ENCODE measurements at regions of chr15 and their contacts with region 1.

Region 1: GRCh38 chr15:30073915-30074314 is 8.8 kb upstream of the GOLGA8J start:
- DNase-seq: no peak
- H3K4me3 Mint-ChIP-seq: no peak overlapping the region
- H3K27ac Mint-ChIP-seq: no peak overlapping the region
- H3K4me1 Mint-ChIP-seq: peaks cover 6% of the 10 kb centered on the region
- H3K27me3 Mint-ChIP-seq: peaks cover 19% of the 10 kb centered on the region
- CTCF ChIP-seq: no peak

Region 2: DNA sequence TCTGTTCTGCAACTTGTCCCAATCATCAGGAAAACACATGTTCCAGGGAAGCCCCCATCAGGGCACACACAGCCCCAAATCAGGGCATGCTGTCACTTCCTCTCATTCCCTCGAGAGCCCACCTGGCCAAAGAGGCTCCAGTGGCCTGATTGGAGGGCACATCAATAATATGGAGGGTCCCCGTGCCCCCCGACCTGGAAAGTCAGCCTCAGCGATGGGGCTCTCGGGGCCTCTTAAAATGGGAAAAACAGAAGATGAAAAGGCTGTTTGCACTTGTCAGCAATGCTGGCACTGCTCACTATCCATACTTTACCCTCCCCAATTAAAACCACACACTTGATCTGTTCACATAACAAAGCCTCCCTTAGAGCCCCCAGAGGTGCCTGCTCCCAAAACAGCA is 631.4 kb before region 1 on chr15:
- CTCF ChIA-PET with region 1: no interaction called
- POLR2A ChIA-PET with region 1: no interaction called
- intact Hi-C with region 1: no loop called
- DNase-seq: no peak
- H3K4me3 Mint-ChIP-seq: no peak overlapping the region
- H3K27ac Mint-ChIP-seq: no peak overlapping the region
- H3K4me1 Mint-ChIP-seq: no peaks in the 10 kb centered on the region
- H3K27me3 Mint-ChIP-seq: peaks cover 11% of the 10 kb centered on the region
- CTCF ChIP-seq: no peak

Region 3: GRCh38 chr15:29736744-29737020 is 337.2 kb before region 1 on chr15:
- CTCF ChIA-PET with region 1: interaction called, 14 read pairs
- POLR2A ChIA-PET with region 1: no interaction called
- intact Hi-C with region 1: loop called (anchors 10 kb)
- DNase-seq: peak; percentile 90
- H3K4me3 Mint-ChIP-seq: no peak overlapping the region
- H3K27ac Mint-ChIP-seq: peak overlapping the region; percentile 60
- H3K4me1 Mint-ChIP-seq: peaks cover 22% of the 10 kb centered on the region
- H3K27me3 Mint-ChIP-seq: no peaks in the 10 kb centered on the region
- CTCF ChIP-seq: no peak

Region 4: DNA sequence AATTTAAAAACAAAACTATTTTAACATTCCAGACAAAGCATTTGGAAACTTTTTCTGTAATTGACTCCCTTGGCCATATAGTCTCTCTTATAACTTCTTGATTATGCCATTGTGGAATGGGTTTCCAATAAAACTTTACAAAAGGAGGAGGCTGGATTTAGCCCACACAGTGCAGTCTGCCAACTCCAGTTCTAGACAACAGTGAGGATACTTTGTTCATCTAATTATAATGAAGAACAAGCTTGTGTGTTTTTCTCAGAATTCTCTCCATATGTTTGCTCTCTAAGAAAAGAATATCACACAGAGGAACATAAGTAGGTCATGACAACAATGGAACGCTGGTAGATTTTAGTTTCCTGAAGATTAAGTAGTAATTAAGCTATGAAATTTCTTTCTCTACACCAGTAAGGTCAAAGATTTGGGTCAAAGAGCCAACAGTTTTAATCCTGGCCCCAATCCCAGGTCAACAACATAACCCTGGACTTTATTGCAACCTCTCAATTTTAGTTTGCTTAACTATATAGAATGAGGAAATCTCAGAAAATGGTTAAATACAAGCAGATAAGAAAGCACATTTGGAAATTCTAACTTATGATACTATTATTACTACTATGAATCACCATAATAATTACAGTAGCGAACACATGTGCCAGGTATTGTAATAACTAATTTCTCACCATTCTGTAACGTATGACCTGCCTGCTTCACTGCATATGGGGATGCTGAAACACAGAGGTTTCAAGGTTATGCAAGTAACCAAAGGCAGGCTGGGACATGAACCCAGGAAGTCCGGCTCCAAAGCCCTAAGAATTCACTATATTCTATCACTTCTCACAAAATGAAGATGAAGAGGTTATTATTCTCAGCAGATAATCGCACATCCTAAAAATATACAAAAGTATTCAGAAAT is 317.3 kb before region 1 on chr15:
- CTCF ChIA-PET with region 1: interaction called, 10 read pairs
- POLR2A ChIA-PET with region 1: no interaction called
- intact Hi-C with region 1: no loop called
- DNase-seq: peak; percentile 84
- H3K4me3 Mint-ChIP-seq: no peak overlapping the region
- H3K27ac Mint-ChIP-seq: peak overlapping the region; percentile 57
- H3K4me1 Mint-ChIP-seq: peaks cover 14% of the 10 kb centered on the region
- H3K27me3 Mint-ChIP-seq: no peaks in the 10 kb centered on the region
- CTCF ChIP-seq: no peak

Region 5: GRCh38 chr15:30043211-30043655 is 30.7 kb before region 1 on chr15:
- CTCF ChIA-PET with region 1: interaction called, 31 read pairs
- POLR2A ChIA-PET with region 1: interaction called, 4 read pairs
- intact Hi-C with region 1: loop called (anchors 1 kb)
- DNase-seq: peak; percentile 33
- H3K4me3 Mint-ChIP-seq: no peak overlapping the region
- H3K27ac Mint-ChIP-seq: no peak overlapping the region
- H3K4me1 Mint-ChIP-seq: peaks cover 24% of the 10 kb centered on the region
- H3K27me3 Mint-ChIP-seq: no peaks in the 10 kb centered on the region
- CTCF ChIP-seq: peak; percentile 38

Measured in MCF 10A (cell line).